ENCODE measurements at regions of chr1 and their contacts with region 1.

Region 1: DNA sequence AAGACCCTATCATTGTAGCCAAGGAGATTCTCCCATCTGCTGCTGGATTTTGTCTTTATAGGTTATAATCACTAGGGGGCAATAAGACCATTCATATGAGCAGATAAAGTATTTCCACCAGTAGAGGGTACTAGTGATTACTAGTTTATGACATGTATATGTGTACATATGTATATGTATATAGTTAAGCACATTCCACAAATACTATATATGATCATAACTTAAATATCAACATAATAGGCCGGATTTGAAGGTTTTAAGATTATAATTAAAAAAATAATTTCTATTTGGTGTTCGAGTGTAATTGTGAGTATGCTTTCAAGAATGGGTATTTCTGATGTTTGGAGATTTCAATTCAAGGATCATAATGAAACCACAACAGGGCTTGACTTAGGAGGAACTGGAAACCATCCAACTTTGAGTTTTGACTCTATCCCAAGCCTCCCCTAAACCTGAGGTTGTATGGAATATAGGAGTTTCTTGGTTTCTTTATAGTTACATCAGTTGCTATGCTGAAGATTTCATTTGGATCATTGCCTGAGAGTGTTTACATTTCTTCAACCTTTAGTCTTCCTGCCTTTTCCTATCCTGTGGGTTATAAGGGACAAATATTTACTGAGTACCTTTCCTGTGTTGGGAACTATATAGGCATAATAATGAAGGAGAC is 16.9 kb downstream of the TCEANC2 start:
- DNase-seq: no peak
- H3K4me3 ChIP-seq: no peak overlapping the region
- H3K27ac ChIP-seq: no peak overlapping the region
- H3K4me1 ChIP-seq: no peaks in the 10 kb centered on the region
- H3K27me3 ChIP-seq: no peaks in the 10 kb centered on the region
- CTCF ChIP-seq: peak; percentile 53 to 74 (median 56)
- POLR2A ChIP-seq: no peak

Region 2: GRCh38 chr1:54800899-54801759 is 730.8 kb after region 1 on chr1 and contains the start of gene TTC22:
- intact Hi-C with region 1: loop called (anchors 10 kb)
- DNase-seq: no peak
- H3K4me3 ChIP-seq: peak within 1 kb of the TSS; percentile 48 to 51
- H3K27ac ChIP-seq: peak within 1 kb of the TSS; percentile 55
- H3K4me1 ChIP-seq: peaks cover 38% of the 10 kb centered on the region
- H3K27me3 ChIP-seq: no peaks in the 10 kb centered on the region
- CTCF ChIP-seq: peak in 2 of 3 experiments; percentile 21 to 39
- POLR2A ChIP-seq: no peak
- total RNA-seq, gene TTC22: 43.5 TPM

Measured in vagina (tissue), 2 donors.